ENCODE measurements at regions of chr1 and their contacts with region 1.

Region 1: GRCh38 chr1:23403735-23404486 is 20.6 kb downstream of the TCEA3 start:
- DNase-seq: peak; percentile 84 to 92
- ATAC-seq: peak; percentile 77 to 81 (median 80)
- H3K4me3 ChIP-seq: no peak overlapping the region
- H3K27ac ChIP-seq: peak overlapping the region; percentile 75
- H3K4me1 ChIP-seq: peaks cover 54% of the 10 kb centered on the region
- H3K27me3 ChIP-seq: no peaks in the 10 kb centered on the region
- CTCF ChIP-seq: peak; percentile 93

Region 2: DNA sequence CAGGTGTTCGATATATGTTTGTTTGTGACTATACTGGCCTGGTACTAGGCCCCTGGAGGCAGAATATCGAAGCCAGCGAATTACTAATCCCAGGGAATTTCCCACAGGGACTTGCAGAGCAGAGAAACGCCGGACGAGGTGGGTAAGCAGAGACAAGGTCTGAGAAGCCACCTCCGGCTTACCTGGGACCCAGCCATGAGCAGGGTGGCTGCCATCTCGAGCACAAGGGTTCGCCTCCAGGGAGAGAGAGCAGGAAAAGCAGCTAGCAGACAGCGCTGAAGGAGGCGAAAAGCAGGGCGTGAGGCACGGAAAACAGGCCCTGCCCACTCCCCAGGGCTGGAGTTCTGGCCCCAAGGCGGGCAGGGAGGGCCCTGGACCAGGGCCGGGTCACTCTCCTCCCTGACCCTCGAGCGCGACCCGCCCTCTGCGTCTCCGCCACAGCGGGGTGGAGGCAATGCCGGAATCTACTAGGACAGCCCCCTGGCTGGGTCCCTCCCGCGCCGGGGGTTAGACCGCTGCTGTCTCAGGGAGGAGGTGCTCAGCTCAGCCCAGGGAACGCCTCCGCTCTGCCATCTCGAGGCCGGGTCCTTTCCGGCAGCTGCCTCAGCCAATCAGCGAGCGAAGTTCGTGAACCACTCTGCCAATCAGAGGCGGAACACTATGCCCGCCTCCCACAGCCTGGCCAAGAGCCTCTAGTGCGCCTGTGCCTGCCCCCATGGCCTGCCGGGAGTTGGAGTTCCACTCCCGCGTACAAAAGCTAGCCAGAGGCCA is 35.9 kb before region 1 on chr1:
- intact Hi-C with region 1: loop called in 1 of 2 experiments (anchors 5 kb)
- DNase-seq: peak; percentile 99
- ATAC-seq: peak; percentile 91 to 93 (median 92)
- H3K4me3 ChIP-seq: peak overlapping the region; percentile 89
- H3K27ac ChIP-seq: peak overlapping the region; percentile 98
- H3K4me1 ChIP-seq: peaks cover 42% of the 10 kb centered on the region
- H3K27me3 ChIP-seq: no peaks in the 10 kb centered on the region
- CTCF ChIP-seq: no peak

Region 3: GRCh38 chr1:23496490-23497181 is 92.7 kb after region 1 on chr1:
- intact Hi-C with region 1: no loop called
- DNase-seq: no peak
- ATAC-seq: peak; percentile 15 to 53 (median 35)
- H3K4me3 ChIP-seq: no peak overlapping the region
- H3K27ac ChIP-seq: no peak overlapping the region
- H3K4me1 ChIP-seq: peaks cover 4% of the 10 kb centered on the region
- H3K27me3 ChIP-seq: no peaks in the 10 kb centered on the region
- CTCF ChIP-seq: no peak

Region 4: GRCh38 chr1:23777979-23778814 is 374.3 kb after region 1 on chr1 and contains the start of gene PITHD1:
- intact Hi-C with region 1: no loop called
- DNase-seq: peak; percentile 81 to 91
- ATAC-seq: peak; percentile 88 to 93 (median 92)
- H3K4me3 ChIP-seq: peak within 1 kb of the TSS; percentile 78
- H3K27ac ChIP-seq: peak within 1 kb of the TSS; percentile 92
- H3K4me1 ChIP-seq: peaks cover 33% of the 10 kb centered on the region
- H3K27me3 ChIP-seq: no peaks in the 10 kb centered on the region
- CTCF ChIP-seq: no peak
- total RNA-seq, gene PITHD1: 53.4 to 72.1 (median 63.4) TPM